Left cardiac atrium (tissue), 4 donors: ENCODE measurements at regions of chr10 and their contacts with region 1.

Region 1: DNA sequence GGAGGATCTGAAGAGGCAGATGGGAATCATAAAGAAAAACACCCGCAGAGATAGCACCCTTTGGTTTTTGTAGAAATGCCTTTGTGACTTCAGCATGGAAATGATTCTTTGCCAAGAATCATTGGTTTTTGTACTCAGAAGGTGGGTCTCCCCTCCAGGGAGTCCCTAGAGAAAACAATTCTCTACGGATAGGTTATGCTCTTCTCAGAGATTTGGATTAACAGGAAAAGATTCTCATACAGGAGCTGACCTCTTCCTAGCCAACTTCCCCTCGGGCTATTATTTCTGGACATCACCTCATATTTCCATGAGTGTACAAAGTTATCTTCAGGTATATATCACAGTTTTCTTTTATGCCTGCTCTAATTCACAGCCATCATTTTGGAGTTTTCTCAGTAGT is 274.2 kb upstream of the HABP2 start:
- DNase-seq: no peak
- ATAC-seq: no peak

Region 2: GRCh38 chr10:112471878-112472487 is 806.7 kb before region 1 on chr10:
- intact Hi-C with region 1: loop called in 1 of 2 experiments (anchors 5 kb)
- DNase-seq: no peak
- ATAC-seq: peak; percentile 53 to 59